Caco-2 (cell line): ENCODE measurements at regions of chr14 and their contacts with region 1.

Region 1: GRCh38 chr14:77320238-77320935 is at the start of gene POMT2:
- DNase-seq: peak; percentile 95 to 96
- H3K4me3 ChIP-seq: peak within 1 kb of the TSS; percentile 98
- H3K4me3 Mint-ChIP-seq: peak within 1 kb of the TSS; percentile 99
- H3K27ac Mint-ChIP-seq: peak within 1 kb of the TSS; percentile 100
- H3K4me1 ChIP-seq: peaks cover 11% of the 10 kb centered on the region
- H3K4me1 Mint-ChIP-seq: peaks cover 7% of the 10 kb centered on the region
- H3K27me3 ChIP-seq: no peaks in the 10 kb centered on the region
- H3K27me3 Mint-ChIP-seq: no peaks in the 10 kb centered on the region
- CTCF ChIP-seq: peak; percentile 25 to 71
- total RNA-seq, gene POMT2: 30.4 and 36.9 TPM in 2 replicates

Region 2: GRCh38 chr14:77151918-77152588 is 168.3 kb before region 1 on chr14:
- CTCF ChIA-PET with region 1: interaction called, 28 read pairs
- POLR2A ChIA-PET with region 1: no interaction called
- intact Hi-C with region 1: loop called (anchors 1 kb)
- DNase-seq: no peak
- H3K4me3 ChIP-seq: no peak overlapping the region
- H3K4me3 Mint-ChIP-seq: no peak overlapping the region
- H3K27ac Mint-ChIP-seq: no peak overlapping the region
- H3K4me1 ChIP-seq: no peaks in the 10 kb centered on the region
- H3K4me1 Mint-ChIP-seq: no peaks in the 10 kb centered on the region
- H3K27me3 ChIP-seq: no peaks in the 10 kb centered on the region
- H3K27me3 Mint-ChIP-seq: peaks cover 8% of the 10 kb centered on the region
- CTCF ChIP-seq: no peak

Region 3: GRCh38 chr14:77301103-77301502 is 19.3 kb before region 1 on chr14:
- CTCF ChIA-PET with region 1: interaction called, 66 read pairs
- POLR2A ChIA-PET with region 1: interaction called, 11 read pairs
- intact Hi-C with region 1: loop called (anchors 1 kb)
- DNase-seq: peak; percentile 81 to 82
- H3K4me3 ChIP-seq: no peak overlapping the region
- H3K4me3 Mint-ChIP-seq: no peak overlapping the region
- H3K27ac Mint-ChIP-seq: no peak overlapping the region
- H3K4me1 ChIP-seq: peaks cover 21% of the 10 kb centered on the region; the same call in 1 of the 2 replicates
- H3K4me1 Mint-ChIP-seq: peaks cover 18% of the 10 kb centered on the region
- H3K27me3 ChIP-seq: no peaks in the 10 kb centered on the region
- H3K27me3 Mint-ChIP-seq: no peaks in the 10 kb centered on the region
- CTCF ChIP-seq: peak; percentile 84 to 90

Region 4: GRCh38 chr14:77347751-77348150 is 27.4 kb after region 1 on chr14:
- CTCF ChIA-PET with region 1: no interaction called
- POLR2A ChIA-PET with region 1: no interaction called
- intact Hi-C with region 1: no loop called
- DNase-seq: no peak
- H3K4me3 ChIP-seq: no peak overlapping the region
- H3K4me3 Mint-ChIP-seq: no peak overlapping the region
- H3K27ac Mint-ChIP-seq: no peak overlapping the region
- H3K4me1 ChIP-seq: no peaks in the 10 kb centered on the region
- H3K4me1 Mint-ChIP-seq: no peaks in the 10 kb centered on the region
- H3K27me3 ChIP-seq: no peaks in the 10 kb centered on the region
- H3K27me3 Mint-ChIP-seq: no peaks in the 10 kb centered on the region
- CTCF ChIP-seq: no peak

Region 5: GRCh38 chr14:77376771-77377501 is 56.5 kb after region 1 on chr14 and contains the starts of genes SAMD15 and TMED8:
- CTCF ChIA-PET with region 1: interaction called, 7 read pairs
- POLR2A ChIA-PET with region 1: interaction called, 17 read pairs
- intact Hi-C with region 1: loop called (anchors 1 kb)
- DNase-seq: peak; percentile 83 to 91
- H3K4me3 ChIP-seq: peak within 1 kb of the TSS; percentile 73
- H3K4me3 Mint-ChIP-seq: no peak within 1 kb of the TSS
- H3K27ac Mint-ChIP-seq: no peak within 1 kb of the TSS
- H3K4me1 ChIP-seq: peaks cover 23% of the 10 kb centered on the region
- H3K4me1 Mint-ChIP-seq: peaks cover 32% of the 10 kb centered on the region
- H3K27me3 ChIP-seq: no peaks in the 10 kb centered on the region
- H3K27me3 Mint-ChIP-seq: no peaks in the 10 kb centered on the region
- CTCF ChIP-seq: peak in 1 of 2 experiments; percentile 38
- total RNA-seq, gene SAMD15: 0.82 and 1.5 TPM in 2 replicates
- total RNA-seq, gene TMED8: 13.3 and 14.1 TPM in 2 replicates